ENCODE measurements at regions of chr2 and their contacts with region 1.

Region 1: GRCh38 chr2:202178342-202178958 is 59.9 kb downstream of the SUMO1 start:
- DNase-seq: peak; percentile 43 to 57 (median 55)
- H3K4me3 ChIP-seq: no peak overlapping the region
- H3K4me3 Mint-ChIP-seq: no peak overlapping the region
- H3K27ac ChIP-seq: no peak overlapping the region
- H3K27ac Mint-ChIP-seq: no peak overlapping the region
- H3K4me1 ChIP-seq: no peaks in the 10 kb centered on the region
- H3K4me1 Mint-ChIP-seq: peaks cover 0 to 4% (median under 1%) of the 10 kb centered on the region in 4 donors
- H3K27me3 ChIP-seq: no peaks in the 10 kb centered on the region
- H3K27me3 Mint-ChIP-seq: peaks cover 5 to 8% of the 10 kb centered on the region in 2 donors

Region 2: GRCh38 chr2:200901459-200902072 is 1276.9 kb before region 1 on chr2:
- CTCF ChIA-PET with region 1: no interaction called
- POLR2A ChIA-PET with region 1: no interaction called
- intact Hi-C with region 1: loop called (anchors 10 kb)
- DNase-seq: peak; percentile 76 to 83 (median 79)
- H3K4me3 ChIP-seq: no peak overlapping the region
- H3K4me3 Mint-ChIP-seq: no peak overlapping the region
- H3K27ac ChIP-seq: peak overlapping the region; percentile 1
- H3K27ac Mint-ChIP-seq: peak overlapping the region; percentile 10 to 81 (median 65)
- H3K4me1 ChIP-seq: no peaks in the 10 kb centered on the region
- H3K4me1 Mint-ChIP-seq: peaks cover 6 to 7% (median 6%) of the 10 kb centered on the region in 4 donors
- H3K27me3 ChIP-seq: no peaks in the 10 kb centered on the region
- H3K27me3 Mint-ChIP-seq: no peaks in the 10 kb centered on the region

Region 3: DNA sequence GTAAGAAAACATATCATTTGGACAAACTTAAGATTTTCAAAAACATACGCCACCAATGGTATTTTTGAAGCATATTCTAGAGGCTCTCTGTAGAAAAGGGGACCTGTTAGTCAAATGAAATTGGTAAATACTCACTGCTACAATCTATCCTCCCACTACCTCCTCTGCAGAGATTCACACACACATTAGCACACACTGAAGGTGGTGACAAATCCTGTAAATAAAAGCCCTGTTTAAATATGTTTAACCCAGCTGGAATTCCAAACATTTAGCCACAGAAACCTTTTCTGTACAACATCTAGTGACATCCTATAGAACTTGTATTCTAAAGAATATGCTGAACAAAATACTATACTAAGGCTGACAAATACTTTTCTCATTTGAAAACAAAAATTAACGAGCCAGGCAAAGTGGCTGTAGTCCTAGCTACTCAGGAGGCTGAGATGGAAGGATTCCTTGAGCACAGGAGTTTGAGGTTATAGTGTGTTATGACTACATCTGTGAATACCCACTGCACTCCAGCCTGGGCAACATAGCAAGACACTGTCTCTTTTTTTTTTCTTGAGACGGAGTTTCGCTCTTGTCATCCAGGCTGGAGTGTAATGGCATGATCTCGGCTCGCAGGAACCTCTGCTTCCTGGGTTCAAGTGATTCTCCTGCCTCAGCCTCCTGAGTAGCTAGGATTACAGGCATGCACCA is 423.6 kb before region 1 on chr2:
- CTCF ChIA-PET with region 1: no interaction called
- POLR2A ChIA-PET with region 1: no interaction called
- intact Hi-C with region 1: loop called (anchors 1 kb)
- DNase-seq: no peak
- H3K4me3 ChIP-seq: no peak overlapping the region
- H3K4me3 Mint-ChIP-seq: no peak overlapping the region
- H3K27ac ChIP-seq: no peak overlapping the region
- H3K27ac Mint-ChIP-seq: peak overlapping the region in 1 of 7 donors; percentile 21
- H3K4me1 ChIP-seq: no peaks in the 10 kb centered on the region
- H3K4me1 Mint-ChIP-seq: no peaks in the 10 kb centered on the region
- H3K27me3 ChIP-seq: no peaks in the 10 kb centered on the region
- H3K27me3 Mint-ChIP-seq: no peaks in the 10 kb centered on the region

Region 4: GRCh38 chr2:201854221-201854801 is 324.1 kb before region 1 on chr2:
- CTCF ChIA-PET with region 1: interaction called, 164 read pairs
- POLR2A ChIA-PET with region 1: no interaction called
- intact Hi-C with region 1: no loop called
- DNase-seq: no peak
- H3K4me3 ChIP-seq: no peak overlapping the region
- H3K4me3 Mint-ChIP-seq: no peak overlapping the region
- H3K27ac ChIP-seq: no peak overlapping the region
- H3K27ac Mint-ChIP-seq: no peak overlapping the region
- H3K4me1 ChIP-seq: peaks cover 12% of the 10 kb centered on the region
- H3K4me1 Mint-ChIP-seq: peaks cover 9 to 11% (median 10%) of the 10 kb centered on the region in 4 donors
- H3K27me3 ChIP-seq: no peaks in the 10 kb centered on the region
- H3K27me3 Mint-ChIP-seq: peaks cover 13 to 26% of the 10 kb centered on the region in 2 donors

Region 5: DNA sequence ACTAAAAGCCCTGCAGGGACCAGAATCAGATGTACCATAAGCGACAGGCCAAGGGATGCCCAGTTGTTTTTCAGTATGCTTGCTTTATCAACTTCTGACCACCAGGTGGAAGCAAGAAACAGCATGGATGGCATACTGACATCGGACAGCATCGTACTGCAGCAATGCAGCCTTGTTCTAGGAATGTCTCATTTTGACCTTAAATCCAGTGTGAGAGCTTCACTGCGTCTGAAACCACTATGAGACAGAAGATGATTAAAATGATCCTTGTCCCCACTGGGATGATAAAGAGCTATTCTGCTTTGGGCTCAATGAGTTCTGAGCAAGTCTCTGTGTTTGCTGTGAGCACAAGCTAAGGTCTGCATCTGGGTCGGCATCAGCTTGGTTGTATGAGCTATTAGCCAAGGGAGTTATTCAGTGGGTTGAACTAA is 317.8 kb before region 1 on chr2:
- CTCF ChIA-PET with region 1: interaction called, 164 read pairs
- POLR2A ChIA-PET with region 1: interaction called, 4 read pairs
- intact Hi-C with region 1: no loop called
- DNase-seq: peak in 4 of 5 donors; percentile 40 to 50 (median 46)
- H3K4me3 ChIP-seq: no peak overlapping the region
- H3K4me3 Mint-ChIP-seq: peak overlapping the region in 2 of 8 donors; percentile 50 to 62
- H3K27ac ChIP-seq: no peak overlapping the region
- H3K27ac Mint-ChIP-seq: no peak overlapping the region
- H3K4me1 ChIP-seq: peaks cover 12% of the 10 kb centered on the region
- H3K4me1 Mint-ChIP-seq: peaks cover 13 to 19% (median 16%) of the 10 kb centered on the region in 4 donors
- H3K27me3 ChIP-seq: no peaks in the 10 kb centered on the region
- H3K27me3 Mint-ChIP-seq: peaks cover 18 to 28% of the 10 kb centered on the region in 2 donors

Region 6: DNA sequence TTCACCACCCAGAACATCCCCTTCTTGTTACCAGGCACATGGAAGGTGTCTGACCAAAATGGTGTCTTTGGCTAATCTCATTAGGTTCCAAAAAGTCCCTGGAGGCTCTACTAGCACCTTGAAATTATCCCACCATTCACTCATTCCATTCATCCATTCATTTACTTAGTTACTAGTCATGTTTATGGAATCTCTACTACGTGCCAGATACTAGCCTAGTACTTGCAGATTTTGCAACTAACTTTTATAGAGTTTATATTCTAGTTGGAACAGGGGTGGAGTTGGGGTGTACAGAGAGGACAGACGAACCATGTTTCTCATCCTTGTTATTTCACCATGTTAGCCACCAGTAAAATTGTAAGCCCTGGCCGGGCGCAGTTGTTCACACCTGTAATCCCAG is 83.1 kb after region 1 on chr2:
- CTCF ChIA-PET with region 1: no interaction called
- POLR2A ChIA-PET with region 1: no interaction called
- intact Hi-C with region 1: no loop called
- DNase-seq: no peak
- H3K4me3 ChIP-seq: no peak overlapping the region
- H3K4me3 Mint-ChIP-seq: no peak overlapping the region
- H3K27ac ChIP-seq: no peak overlapping the region
- H3K27ac Mint-ChIP-seq: no peak overlapping the region
- H3K4me1 ChIP-seq: peaks cover 6% of the 10 kb centered on the region
- H3K4me1 Mint-ChIP-seq: peaks cover 0 to 5% (median 0%) of the 10 kb centered on the region in 4 donors
- H3K27me3 ChIP-seq: no peaks in the 10 kb centered on the region
- H3K27me3 Mint-ChIP-seq: no peaks in the 10 kb centered on the region

Region 7: DNA sequence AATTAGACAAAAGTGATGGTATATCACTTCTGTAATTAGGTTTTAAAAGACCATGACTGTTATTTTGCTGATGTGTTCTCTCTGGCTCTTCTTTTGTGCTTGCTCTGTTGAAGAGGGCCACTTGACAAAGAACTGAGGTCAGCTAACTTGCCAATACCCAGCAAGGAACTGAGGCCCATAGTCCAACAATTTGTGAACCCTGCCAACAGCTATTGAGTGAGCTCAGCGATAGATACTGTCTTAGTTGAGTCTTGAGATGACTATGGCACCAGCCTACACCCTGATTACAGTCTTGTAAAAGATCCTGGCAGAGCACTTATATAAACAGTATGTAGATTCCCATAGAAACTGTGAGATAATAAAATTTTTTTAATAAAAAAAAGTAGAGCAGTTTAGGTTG is 300.6 kb after region 1 on chr2:
- CTCF ChIA-PET with region 1: no interaction called
- POLR2A ChIA-PET with region 1: no interaction called
- intact Hi-C with region 1: no loop called
- DNase-seq: no peak
- H3K4me3 ChIP-seq: no peak overlapping the region
- H3K4me3 Mint-ChIP-seq: no peak overlapping the region
- H3K27ac ChIP-seq: no peak overlapping the region
- H3K27ac Mint-ChIP-seq: peak overlapping the region in 1 of 7 donors; percentile 38
- H3K4me1 ChIP-seq: no peaks in the 10 kb centered on the region
- H3K4me1 Mint-ChIP-seq: peaks cover 0 to 8% (median 3%) of the 10 kb centered on the region in 4 donors
- H3K27me3 ChIP-seq: no peaks in the 10 kb centered on the region
- H3K27me3 Mint-ChIP-seq: no peaks in the 10 kb centered on the region

Measured in CD4-positive, alpha-beta memory T cell (primary cell).